Common myeloid progenitor, CD34-positive (primary cell): ENCODE measurements at regions of chr13 and their contacts with region 1.

Region 1: GRCh38 chr13:28100150-28101121 is at the start of gene FLT3:
- DNase-seq: peak; percentile 95 to 99 (median 99)
- H3K4me3 ChIP-seq: peak within 1 kb of the TSS; percentile 73 to 88 (median 82)
- H3K27ac ChIP-seq: peak within 1 kb of the TSS; percentile 79 to 89
- H3K4me1 ChIP-seq: peaks cover 19 to 54% (median 31%) of the 10 kb centered on the region in 4 experiments
- H3K27me3 ChIP-seq: no peaks in the 10 kb centered on the region

Region 2: DNA sequence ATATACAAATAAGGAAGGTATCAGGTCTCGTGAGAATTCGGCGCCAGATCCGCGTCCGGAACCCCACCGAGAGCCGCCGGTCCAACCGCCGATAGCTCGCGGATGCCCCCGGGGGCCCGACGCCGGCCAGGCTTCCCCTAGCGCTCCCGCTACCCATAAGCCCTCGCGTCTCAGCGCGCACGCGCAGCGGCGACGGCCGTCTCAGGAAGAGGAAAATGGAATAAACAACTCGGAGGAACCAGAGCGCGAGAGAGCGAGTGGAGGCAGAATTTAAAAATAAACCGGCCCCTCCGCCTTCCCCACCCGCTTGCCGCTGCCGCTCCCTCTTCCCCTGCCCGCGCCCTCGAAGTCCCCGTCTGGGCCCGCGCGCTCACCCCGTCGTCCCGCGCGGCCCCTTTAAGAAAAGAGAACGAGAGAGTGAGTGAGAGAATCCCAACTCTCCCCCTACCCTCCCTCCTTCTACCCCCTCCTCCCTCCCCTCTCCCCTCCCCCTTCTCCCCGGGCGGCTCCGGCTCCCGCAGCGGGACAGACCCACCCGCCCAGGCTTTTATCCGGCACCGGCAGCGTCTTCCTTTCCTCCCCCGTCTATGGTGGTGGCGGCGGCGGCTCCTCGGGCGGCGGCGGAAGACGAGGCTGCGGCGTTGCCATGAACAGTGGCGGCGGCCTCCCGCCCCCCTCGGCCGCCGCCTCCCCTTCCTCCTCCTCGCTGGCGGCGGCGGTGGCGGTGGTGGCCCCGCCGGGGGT is 37.7 kb after region 1 on chr13 and contains the start of gene PAN3:
- CTCF ChIA-PET with region 1: interaction called, 4 read pairs
- POLR2A ChIA-PET with region 1: interaction called, 22 read pairs
- DNase-seq: peak; percentile 96 to 99 (median 99)
- H3K4me3 ChIP-seq: peak within 1 kb of the TSS; percentile 79 to 98 (median 89)
- H3K27ac ChIP-seq: peak within 1 kb of the TSS; percentile 98 to 99
- H3K4me1 ChIP-seq: peaks cover 21 to 50% (median 31%) of the 10 kb centered on the region in 4 experiments
- H3K27me3 ChIP-seq: no peaks in the 10 kb centered on the region

Region 3: DNA sequence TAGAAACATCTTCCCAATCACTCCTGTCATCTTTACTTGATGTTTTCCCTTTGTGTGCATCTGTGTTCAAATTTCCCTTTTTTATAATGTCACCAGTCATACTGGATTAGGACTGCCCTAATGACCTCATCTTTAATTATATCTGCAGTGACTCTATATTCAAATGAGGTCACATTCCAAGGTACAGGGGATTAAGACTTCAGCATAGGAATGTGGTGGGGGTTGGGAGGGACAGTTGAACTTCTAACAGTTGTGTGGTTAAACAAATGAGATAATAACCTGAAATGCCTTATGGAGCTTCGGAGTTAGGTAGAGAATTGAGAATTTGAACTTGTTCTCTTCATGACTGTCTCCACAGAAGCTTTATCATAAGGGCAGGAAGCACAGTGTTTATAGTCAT is 60.9 kb after region 1 on chr13:
- CTCF ChIA-PET with region 1: no interaction called
- POLR2A ChIA-PET with region 1: no interaction called
- DNase-seq: peak; percentile 30 to 78 (median 70)
- H3K4me3 ChIP-seq: peak overlapping the region in 1 of 7 experiments; percentile 45
- H3K27ac ChIP-seq: peak overlapping the region; percentile 12 to 73
- H3K4me1 ChIP-seq: peaks cover 3 to 25% (median 11%) of the 10 kb centered on the region in 4 experiments
- H3K27me3 ChIP-seq: no peaks in the 10 kb centered on the region